CD4-positive, alpha-beta memory T cell (primary cell): ENCODE measurements at regions of chr10 and their contacts with region 1.

Region 1: GRCh38 chr10:17607603-17608332 is 9.4 kb downstream of the HACD1 start:
- DNase-seq: peak in 4 of 5 donors; percentile 53 to 62 (median 58)
- H3K4me3 ChIP-seq: no peak overlapping the region
- H3K4me3 Mint-ChIP-seq: no peak overlapping the region
- H3K27ac ChIP-seq: no peak overlapping the region
- H3K27ac Mint-ChIP-seq: no peak overlapping the region
- H3K4me1 ChIP-seq: no peaks in the 10 kb centered on the region
- H3K4me1 Mint-ChIP-seq: peaks cover 0 to 5% (median 2%) of the 10 kb centered on the region in 4 donors
- H3K27me3 ChIP-seq: no peaks in the 10 kb centered on the region
- H3K27me3 Mint-ChIP-seq: peaks cover 1 to 3% of the 10 kb centered on the region in 2 donors

Region 2: GRCh38 chr10:17409170-17409733 is 198.5 kb before region 1 on chr10:
- CTCF ChIA-PET with region 1: interaction called, 3 read pairs
- POLR2A ChIA-PET with region 1: no interaction called
- intact Hi-C with region 1: loop called (anchors 5 kb)
- DNase-seq: peak in 4 of 5 donors; percentile 40 to 54 (median 51)
- H3K4me3 ChIP-seq: no peak overlapping the region
- H3K4me3 Mint-ChIP-seq: peak overlapping the region in 4 of 8 donors; percentile 1 to 42 (median 2)
- H3K27ac ChIP-seq: no peak overlapping the region
- H3K27ac Mint-ChIP-seq: peak overlapping the region in 6 of 7 donors; percentile 16 to 86 (median 42)
- H3K4me1 ChIP-seq: peaks cover 14% of the 10 kb centered on the region
- H3K4me1 Mint-ChIP-seq: peaks cover 15 to 27% (median 20%) of the 10 kb centered on the region in 4 donors
- H3K27me3 ChIP-seq: no peaks in the 10 kb centered on the region
- H3K27me3 Mint-ChIP-seq: peaks cover 0 to 3% of the 10 kb centered on the region in 2 donors

Region 3: DNA sequence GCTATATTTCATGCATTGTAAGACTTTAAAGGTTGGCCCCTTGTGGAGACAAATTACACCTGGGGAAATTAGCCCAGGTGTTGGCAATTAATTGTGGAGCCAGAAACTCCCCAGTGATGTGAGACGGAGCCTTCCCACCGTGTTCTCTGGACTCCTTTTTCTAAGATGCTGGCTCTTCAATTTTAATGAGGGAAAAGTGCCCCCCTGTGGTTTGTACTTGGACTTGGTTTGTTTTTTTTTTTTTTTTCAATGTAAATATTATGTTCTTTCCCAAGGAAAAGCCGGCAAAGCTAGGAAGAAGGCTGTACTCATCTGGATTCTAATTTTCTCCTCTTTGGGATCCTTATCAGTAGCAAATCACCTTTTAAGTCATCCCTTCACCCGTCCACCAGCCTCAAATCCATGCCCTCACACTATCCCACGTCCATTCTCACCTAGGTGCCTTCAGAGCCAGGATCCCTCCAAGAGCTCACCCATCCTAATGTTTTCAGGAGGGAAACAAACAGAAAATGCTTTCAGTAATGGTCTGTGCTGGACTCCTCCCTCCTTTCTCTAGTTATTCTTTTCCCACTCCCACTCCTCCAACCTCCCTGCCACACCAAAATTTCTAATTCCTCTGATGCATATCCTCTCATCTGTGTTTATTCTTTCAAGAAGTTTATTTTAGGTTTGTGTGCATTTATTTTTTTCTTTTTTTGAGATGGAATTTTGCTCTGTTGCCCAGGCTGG is 133.0 kb before region 1 on chr10:
- CTCF ChIA-PET with region 1: no interaction called
- POLR2A ChIA-PET with region 1: no interaction called
- intact Hi-C with region 1: no loop called
- DNase-seq: no peak
- H3K4me3 ChIP-seq: no peak overlapping the region
- H3K4me3 Mint-ChIP-seq: no peak overlapping the region
- H3K27ac ChIP-seq: no peak overlapping the region
- H3K27ac Mint-ChIP-seq: peak overlapping the region in 1 of 7 donors; percentile 68
- H3K4me1 ChIP-seq: no peaks in the 10 kb centered on the region
- H3K4me1 Mint-ChIP-seq: peaks cover 3 to 10% (median 5%) of the 10 kb centered on the region in 4 donors
- H3K27me3 ChIP-seq: no peaks in the 10 kb centered on the region
- H3K27me3 Mint-ChIP-seq: peaks cover 18 to 27% of the 10 kb centered on the region in 2 donors

Region 4: GRCh38 chr10:17737027-17737965 is 129.5 kb after region 1 on chr10:
- CTCF ChIA-PET with region 1: interaction called, 114 read pairs
- POLR2A ChIA-PET with region 1: no interaction called
- intact Hi-C with region 1: no loop called
- DNase-seq: peak in 4 of 5 donors; percentile 7 to 30 (median 22)
- H3K4me3 ChIP-seq: no peak overlapping the region
- H3K4me3 Mint-ChIP-seq: no peak overlapping the region
- H3K27ac ChIP-seq: no peak overlapping the region
- H3K27ac Mint-ChIP-seq: no peak overlapping the region
- H3K4me1 ChIP-seq: no peaks in the 10 kb centered on the region
- H3K4me1 Mint-ChIP-seq: peaks cover 0 to 5% (median 3%) of the 10 kb centered on the region in 4 donors
- H3K27me3 ChIP-seq: no peaks in the 10 kb centered on the region
- H3K27me3 Mint-ChIP-seq: no peaks in the 10 kb centered on the region

Region 5: GRCh38 chr10:17742918-17743317 is 135.2 kb after region 1 on chr10:
- CTCF ChIA-PET with region 1: interaction called, 114 read pairs
- POLR2A ChIA-PET with region 1: no interaction called
- intact Hi-C with region 1: loop called (anchors 1 kb)
- DNase-seq: peak; percentile 52 to 62 (median 58)
- H3K4me3 ChIP-seq: no peak overlapping the region
- H3K4me3 Mint-ChIP-seq: peak overlapping the region in 1 of 8 donors; percentile 20
- H3K27ac ChIP-seq: no peak overlapping the region
- H3K27ac Mint-ChIP-seq: no peak overlapping the region
- H3K4me1 ChIP-seq: peaks cover 7% of the 10 kb centered on the region
- H3K4me1 Mint-ChIP-seq: peaks cover 0 to 9% (median 4%) of the 10 kb centered on the region in 4 donors
- H3K27me3 ChIP-seq: no peaks in the 10 kb centered on the region
- H3K27me3 Mint-ChIP-seq: no peaks in the 10 kb centered on the region

Region 6: DNA sequence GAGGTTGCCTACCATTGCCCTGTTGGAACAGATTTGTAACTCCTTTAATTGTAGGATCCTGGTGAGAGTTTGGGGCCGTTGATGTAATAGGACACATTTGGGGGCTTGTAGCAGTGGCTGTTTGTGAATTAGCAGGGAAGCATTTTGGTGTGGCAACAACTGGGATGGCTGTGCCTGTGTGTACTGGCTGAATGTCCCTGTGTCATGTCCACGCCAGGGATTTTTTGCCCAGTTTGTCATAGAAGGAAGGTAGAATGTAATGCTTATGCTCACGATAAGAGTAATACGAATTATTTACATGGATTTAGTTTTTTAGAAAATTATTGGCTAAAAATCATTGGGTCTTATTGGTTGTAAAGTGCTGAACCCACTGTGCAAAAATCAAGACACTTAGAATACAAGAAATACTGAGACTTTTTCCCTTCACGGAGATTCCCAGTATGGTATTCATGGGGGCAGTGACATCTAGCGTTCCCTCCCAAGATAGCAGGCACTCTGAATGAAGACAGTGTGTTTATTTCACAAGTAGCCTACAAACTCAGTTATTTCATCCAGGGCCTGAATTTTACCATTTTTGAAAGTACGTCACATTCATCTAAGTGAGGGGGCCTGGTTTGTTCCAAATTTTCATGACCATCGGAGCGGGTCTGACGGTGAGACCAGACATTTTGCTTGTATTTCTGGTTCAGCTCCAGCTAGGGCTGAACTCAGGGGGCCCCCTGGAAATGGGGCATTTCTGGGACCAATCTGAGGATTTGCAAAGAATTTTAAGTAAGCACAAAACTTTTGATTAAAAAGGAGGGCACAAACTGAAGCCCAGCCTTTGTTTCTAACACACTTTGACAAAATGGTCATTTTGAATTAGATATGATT is 607.2 kb after region 1 on chr10:
- CTCF ChIA-PET with region 1: no interaction called
- POLR2A ChIA-PET with region 1: no interaction called
- intact Hi-C with region 1: loop called (anchors 5 kb)
- DNase-seq: peak in 1 of 5 donors; percentile 7
- H3K4me3 ChIP-seq: no peak overlapping the region
- H3K4me3 Mint-ChIP-seq: no peak overlapping the region
- H3K27ac ChIP-seq: no peak overlapping the region
- H3K27ac Mint-ChIP-seq: no peak overlapping the region
- H3K4me1 ChIP-seq: no peaks in the 10 kb centered on the region
- H3K4me1 Mint-ChIP-seq: no peaks in the 10 kb centered on the region
- H3K27me3 ChIP-seq: no peaks in the 10 kb centered on the region
- H3K27me3 Mint-ChIP-seq: peaks cover 3 to 5% of the 10 kb centered on the region in 2 donors